CD4-positive, alpha-beta T cell (primary cell): ENCODE measurements at regions of chrX and their contacts with region 1.

Region 1: DNA sequence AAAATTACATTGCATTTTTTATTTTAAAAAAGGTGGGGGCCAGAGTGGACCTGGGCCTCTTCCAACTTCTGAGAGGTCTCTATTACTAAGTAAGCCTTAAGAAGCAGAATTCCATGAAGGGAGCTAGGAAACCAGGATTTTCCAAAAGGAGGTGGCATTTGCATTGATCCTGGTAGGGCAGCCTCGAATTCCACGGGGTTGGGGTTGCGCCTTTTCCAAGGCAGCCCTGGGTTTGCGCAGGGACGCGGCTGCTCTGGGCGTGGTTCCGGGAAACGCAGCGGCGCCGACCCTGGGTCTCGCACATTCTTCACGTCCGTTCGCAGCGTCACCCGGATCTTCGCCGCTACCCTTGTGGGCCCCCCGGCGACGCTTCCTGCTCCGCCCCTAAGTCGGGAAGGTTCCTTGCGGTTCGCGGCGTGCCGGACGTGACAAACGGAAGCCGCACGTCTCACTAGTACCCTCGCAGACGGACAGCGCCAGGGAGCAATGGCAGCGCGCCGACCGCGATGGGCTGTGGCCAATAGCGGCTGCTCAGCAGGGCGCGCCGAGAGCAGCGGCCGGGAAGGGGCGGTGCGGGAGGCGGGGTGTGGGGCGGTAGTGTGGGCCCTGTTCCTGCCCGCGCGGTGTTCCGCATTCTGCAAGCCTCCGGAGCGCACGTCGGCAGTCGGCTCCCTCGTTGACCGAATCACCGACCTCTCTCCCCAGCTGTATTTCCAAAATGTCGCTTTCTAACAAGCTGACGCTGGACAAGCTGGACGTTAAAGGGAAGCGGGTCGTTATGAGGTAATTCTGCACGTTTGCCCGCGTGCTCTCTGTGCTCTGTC is at the start of gene PGK1:
- DNase-seq: peak; percentile 83 to 97 (median 90)
- ATAC-seq: peak; percentile 91
- H3K4me3 ChIP-seq: peak within 1 kb of the TSS; percentile 98
- H3K4me3 Mint-ChIP-seq: peak within 1 kb of the TSS; percentile 98
- H3K27ac ChIP-seq: peak within 1 kb of the TSS; percentile 89 to 97
- H3K27ac Mint-ChIP-seq: peak within 1 kb of the TSS; percentile 99
- H3K4me1 ChIP-seq: peaks cover 27% of the 10 kb centered on the region
- H3K4me1 Mint-ChIP-seq: peaks cover 60% of the 10 kb centered on the region
- H3K27me3 ChIP-seq: no peaks in the 10 kb centered on the region
- H3K27me3 Mint-ChIP-seq: no peaks in the 10 kb centered on the region
- CTCF ChIP-seq: no peak
- total RNA-seq, gene PGK1: 267 to 281 TPM

Region 2: DNA sequence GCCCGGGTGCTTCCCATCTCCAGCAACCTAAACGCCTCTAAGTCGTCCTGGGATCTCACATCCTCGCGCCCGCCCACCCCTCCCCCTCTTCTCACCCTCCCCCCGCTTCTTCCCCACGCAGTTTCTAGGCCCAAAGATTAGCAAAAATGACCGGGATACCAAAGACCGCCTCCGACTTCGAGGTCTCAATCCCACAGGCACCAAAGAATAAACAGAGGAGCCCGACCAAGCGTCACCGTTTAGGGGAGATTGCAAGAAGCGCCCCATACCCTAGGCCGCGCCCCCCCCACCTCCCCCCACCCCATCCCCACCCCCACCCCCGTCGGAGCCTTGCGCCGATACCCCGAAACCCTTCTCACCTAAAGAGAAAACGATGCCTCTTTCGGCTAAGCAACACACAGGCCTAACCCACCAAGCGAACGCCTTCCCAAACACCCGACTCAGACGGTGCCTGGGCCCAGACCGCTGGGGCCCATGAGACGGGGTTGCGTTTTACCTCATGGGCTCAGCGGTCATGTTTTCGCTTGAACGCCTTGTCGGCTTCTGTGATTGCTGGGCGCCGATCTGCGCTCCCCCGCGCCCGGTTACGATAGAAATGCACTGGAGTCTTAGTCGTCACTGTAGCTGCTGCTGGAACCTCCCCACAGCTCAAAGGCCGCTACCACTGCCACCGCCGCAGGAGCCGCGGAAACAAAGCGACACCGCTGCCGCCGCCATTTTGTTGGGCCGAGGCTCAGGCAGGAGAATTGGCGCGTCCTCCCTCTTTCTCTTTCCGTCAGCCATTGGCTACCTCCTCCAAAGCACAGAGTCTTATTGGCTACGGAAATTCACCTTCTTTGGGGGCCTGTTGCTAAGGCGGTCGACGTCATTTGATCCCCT is 318.1 kb before region 1 on chrX and contains the start of gene ATRX:
- CTCF ChIA-PET with region 1: no interaction called
- POLR2A ChIA-PET with region 1: no interaction called
- intact Hi-C with region 1: loop called in 1 of 2 experiments (anchors 10 kb)
- DNase-seq: peak; percentile 53 to 91 (median 70)
- ATAC-seq: peak; percentile 88
- H3K4me3 ChIP-seq: peak within 1 kb of the TSS; percentile 92
- H3K4me3 Mint-ChIP-seq: peak within 1 kb of the TSS; percentile 99
- H3K27ac ChIP-seq: peak within 1 kb of the TSS; percentile 77 to 91
- H3K27ac Mint-ChIP-seq: peak within 1 kb of the TSS; percentile 97
- H3K4me1 ChIP-seq: peaks cover 25% of the 10 kb centered on the region
- H3K4me1 Mint-ChIP-seq: peaks cover 54% of the 10 kb centered on the region
- H3K27me3 ChIP-seq: no peaks in the 10 kb centered on the region
- H3K27me3 Mint-ChIP-seq: no peaks in the 10 kb centered on the region
- CTCF ChIP-seq: no peak
- total RNA-seq, gene ATRX: 72.7 to 79.5 TPM

Region 3: GRCh38 chrX:78048052-78048451 is 55.8 kb before region 1 on chrX:
- CTCF ChIA-PET with region 1: no interaction called
- POLR2A ChIA-PET with region 1: no interaction called
- intact Hi-C with region 1: loop called in 1 of 2 experiments (anchors 10 kb)
- DNase-seq: no peak
- ATAC-seq: no peak
- H3K4me3 ChIP-seq: no peak overlapping the region
- H3K4me3 Mint-ChIP-seq: no peak overlapping the region
- H3K27ac ChIP-seq: no peak overlapping the region
- H3K27ac Mint-ChIP-seq: no peak overlapping the region
- H3K4me1 ChIP-seq: no peaks in the 10 kb centered on the region
- H3K4me1 Mint-ChIP-seq: no peaks in the 10 kb centered on the region
- H3K27me3 ChIP-seq: no peaks in the 10 kb centered on the region
- H3K27me3 Mint-ChIP-seq: no peaks in the 10 kb centered on the region
- CTCF ChIP-seq: no peak

Region 4: DNA sequence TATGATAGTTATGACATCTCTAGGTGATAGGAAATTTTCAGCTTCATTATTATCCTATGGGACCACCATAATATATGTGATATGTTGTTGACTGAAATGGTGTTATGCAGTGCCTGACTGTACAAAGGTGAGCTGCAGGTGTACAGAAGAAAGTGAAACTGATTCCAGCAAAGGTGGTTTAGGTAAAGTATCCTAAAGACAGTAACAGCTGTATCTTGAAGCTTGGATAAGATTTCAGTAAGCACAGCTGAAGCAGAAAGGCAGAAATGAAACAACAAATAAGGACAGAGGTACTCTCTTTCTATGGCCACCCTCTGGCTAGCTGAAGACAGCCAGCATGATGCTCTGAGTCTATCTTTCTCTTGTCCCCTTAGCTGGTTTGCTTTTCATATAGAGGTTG is 29.7 kb before region 1 on chrX:
- CTCF ChIA-PET with region 1: no interaction called
- POLR2A ChIA-PET with region 1: interaction called, 13 read pairs
- intact Hi-C with region 1: loop called in 1 of 2 experiments (anchors 5 kb)
- DNase-seq: no peak
- ATAC-seq: peak; percentile 23
- H3K4me3 ChIP-seq: no peak overlapping the region
- H3K4me3 Mint-ChIP-seq: no peak overlapping the region
- H3K27ac ChIP-seq: no peak overlapping the region
- H3K27ac Mint-ChIP-seq: peak overlapping the region; percentile 88
- H3K4me1 ChIP-seq: no peaks in the 10 kb centered on the region
- H3K4me1 Mint-ChIP-seq: peaks cover 13% of the 10 kb centered on the region
- H3K27me3 ChIP-seq: no peaks in the 10 kb centered on the region
- H3K27me3 Mint-ChIP-seq: no peaks in the 10 kb centered on the region
- CTCF ChIP-seq: no peak

Region 5: DNA sequence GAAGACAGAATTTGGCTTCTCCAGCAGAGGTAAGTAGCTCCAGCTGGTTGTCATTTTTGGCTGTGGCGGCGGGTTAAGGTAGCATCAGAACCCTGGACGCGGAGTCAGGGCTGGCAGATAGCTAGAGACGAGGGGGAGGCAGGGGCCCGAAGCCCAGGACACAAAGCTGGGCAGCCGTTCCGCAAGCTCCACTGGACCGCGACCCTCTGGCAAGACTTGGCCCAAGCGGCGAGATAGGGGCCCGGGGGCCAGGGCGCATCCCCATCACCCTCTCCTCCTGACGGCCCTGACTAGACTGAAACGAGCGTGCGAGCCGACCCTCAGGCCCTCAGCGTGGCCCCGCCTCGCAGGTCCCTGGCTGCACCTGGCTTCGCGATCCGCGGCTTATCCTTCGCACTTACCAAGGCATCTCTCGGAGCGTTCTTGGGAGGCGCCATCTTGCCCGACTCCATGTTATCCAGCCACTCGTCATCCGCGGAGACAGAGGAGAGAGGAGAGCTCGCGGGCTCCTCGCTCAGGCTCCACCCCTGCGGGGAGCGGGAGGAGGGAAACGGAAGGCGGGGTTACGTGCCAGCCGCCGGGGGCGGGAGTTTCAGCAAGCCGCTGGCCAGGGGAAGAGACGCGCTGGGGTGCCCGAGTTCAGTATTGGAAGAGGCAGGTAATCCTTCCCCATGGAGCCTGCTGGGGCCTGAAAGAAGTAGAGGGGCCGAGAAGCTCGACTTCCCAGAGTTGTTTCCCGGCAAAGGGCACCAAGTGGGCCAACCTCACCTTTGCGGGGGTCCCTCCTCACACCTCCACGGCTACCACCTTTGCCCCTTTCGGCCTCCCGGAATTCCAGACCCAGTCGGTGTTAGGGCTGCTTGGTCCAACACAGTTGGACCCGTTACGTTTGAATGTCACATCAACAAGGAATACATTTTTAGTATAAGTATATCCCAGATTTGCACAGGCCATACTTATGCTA is 35.6 kb after region 1 on chrX and contains the start of gene TAF9B:
- CTCF ChIA-PET with region 1: no interaction called
- POLR2A ChIA-PET with region 1: interaction called, 17 read pairs
- intact Hi-C with region 1: no loop called
- DNase-seq: peak; percentile 68 to 92 (median 78)
- ATAC-seq: peak; percentile 99
- H3K4me3 ChIP-seq: peak within 1 kb of the TSS; percentile 93
- H3K4me3 Mint-ChIP-seq: peak within 1 kb of the TSS; percentile 96
- H3K27ac ChIP-seq: peak within 1 kb of the TSS; percentile 65 to 77
- H3K27ac Mint-ChIP-seq: peak within 1 kb of the TSS; percentile 94
- H3K4me1 ChIP-seq: peaks cover 11% of the 10 kb centered on the region
- H3K4me1 Mint-ChIP-seq: peaks cover 21% of the 10 kb centered on the region
- H3K27me3 ChIP-seq: no peaks in the 10 kb centered on the region
- H3K27me3 Mint-ChIP-seq: no peaks in the 10 kb centered on the region
- CTCF ChIP-seq: no peak
- total RNA-seq, gene TAF9B: 9.6 to 10.3 TPM

Region 6: DNA sequence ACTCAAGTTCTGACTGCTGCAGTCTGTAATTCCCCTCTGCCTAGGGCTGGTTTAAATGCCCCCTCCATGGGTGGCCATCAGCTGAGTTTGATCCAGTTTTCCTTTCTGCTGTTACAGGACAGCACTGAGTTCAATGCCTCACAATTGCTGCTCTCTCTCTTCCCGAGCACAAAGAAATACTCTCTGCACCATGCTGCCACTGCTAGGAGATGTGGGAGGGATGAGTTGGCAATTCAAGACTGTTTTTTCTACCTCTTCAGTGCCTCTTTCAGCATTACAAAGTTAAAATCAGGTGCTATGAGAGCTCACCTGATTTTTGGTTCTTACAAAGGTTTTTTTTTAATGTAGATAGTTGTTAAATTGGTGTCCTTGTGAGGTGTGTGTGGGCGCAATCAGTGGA is 199.3 kb after region 1 on chrX:
- CTCF ChIA-PET with region 1: no interaction called
- POLR2A ChIA-PET with region 1: no interaction called
- intact Hi-C with region 1: no loop called
- DNase-seq: no peak
- ATAC-seq: no peak
- H3K4me3 ChIP-seq: no peak overlapping the region
- H3K4me3 Mint-ChIP-seq: no peak overlapping the region
- H3K27ac ChIP-seq: no peak overlapping the region
- H3K27ac Mint-ChIP-seq: no peak overlapping the region
- H3K4me1 ChIP-seq: no peaks in the 10 kb centered on the region
- H3K4me1 Mint-ChIP-seq: no peaks in the 10 kb centered on the region
- H3K27me3 ChIP-seq: no peaks in the 10 kb centered on the region
- H3K27me3 Mint-ChIP-seq: no peaks in the 10 kb centered on the region
- CTCF ChIP-seq: no peak

Region 7: GRCh38 chrX:78517124-78517523 is 413.3 kb after region 1 on chrX:
- CTCF ChIA-PET with region 1: no interaction called
- POLR2A ChIA-PET with region 1: no interaction called
- intact Hi-C with region 1: loop called in 1 of 2 experiments (anchors 10 kb)
- DNase-seq: peak in 13 of 14 experiments; percentile 12 to 92 (median 45)
- ATAC-seq: peak; percentile 88
- H3K4me3 ChIP-seq: peak overlapping the region; percentile 12
- H3K4me3 Mint-ChIP-seq: peak overlapping the region; percentile 36
- H3K27ac ChIP-seq: peak overlapping the region; percentile 9 to 30
- H3K27ac Mint-ChIP-seq: peak overlapping the region; percentile 85
- H3K4me1 ChIP-seq: peaks cover 9% of the 10 kb centered on the region
- H3K4me1 Mint-ChIP-seq: peaks cover 53% of the 10 kb centered on the region
- H3K27me3 ChIP-seq: no peaks in the 10 kb centered on the region
- H3K27me3 Mint-ChIP-seq: no peaks in the 10 kb centered on the region
- CTCF ChIP-seq: no peak